ENCODE measurements at regions of chr4 and their contacts with region 1.

Region 1: DNA sequence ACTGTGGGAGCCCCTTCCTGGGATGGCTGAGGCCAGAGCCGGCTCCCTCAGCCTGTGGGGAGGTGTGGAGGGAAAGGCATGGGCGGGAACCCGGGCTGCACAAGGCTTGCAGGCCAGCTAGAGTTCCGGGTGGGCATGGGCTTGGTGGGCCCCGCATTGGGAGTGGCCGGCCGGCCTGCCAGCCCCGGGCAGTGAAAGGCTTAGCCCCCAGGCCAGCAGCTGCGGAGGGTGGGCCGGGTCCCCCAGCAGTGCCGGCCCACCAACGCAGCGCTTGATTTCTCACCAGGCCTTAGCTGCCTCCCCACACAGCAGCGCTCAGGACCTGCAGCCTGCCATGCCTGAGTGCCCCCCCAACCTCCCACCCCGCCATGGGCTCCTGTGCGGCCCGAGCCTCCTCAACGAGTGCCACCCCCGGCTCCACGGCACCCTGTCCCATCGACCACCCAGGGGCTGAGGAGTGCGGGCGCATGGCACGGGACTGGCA is 78.0 kb downstream of the COX7B2 start:
- DNase-seq: no peak
- H3K4me3 ChIP-seq: no peak overlapping the region
- H3K27ac ChIP-seq: no peak overlapping the region
- H3K4me1 ChIP-seq: no peaks in the 10 kb centered on the region
- H3K27me3 ChIP-seq: no peaks in the 10 kb centered on the region
- CTCF ChIP-seq: no peak
- POLR2A ChIP-seq: no peak

Region 2: GRCh38 chr4:46715468-46715867 is 115.5 kb before region 1 on chr4:
- CTCF ChIA-PET with region 1: no interaction called
- POLR2A ChIA-PET with region 1: no interaction called
- dilution Hi-C with region 1: no loop called
- intact Hi-C with region 1: no loop called
- DNase-seq: no peak
- H3K4me3 ChIP-seq: no peak overlapping the region
- H3K27ac ChIP-seq: no peak overlapping the region
- H3K4me1 ChIP-seq: no peaks in the 10 kb centered on the region
- H3K27me3 ChIP-seq: no peaks in the 10 kb centered on the region
- CTCF ChIP-seq: no peak
- POLR2A ChIP-seq: no peak

Region 3: DNA sequence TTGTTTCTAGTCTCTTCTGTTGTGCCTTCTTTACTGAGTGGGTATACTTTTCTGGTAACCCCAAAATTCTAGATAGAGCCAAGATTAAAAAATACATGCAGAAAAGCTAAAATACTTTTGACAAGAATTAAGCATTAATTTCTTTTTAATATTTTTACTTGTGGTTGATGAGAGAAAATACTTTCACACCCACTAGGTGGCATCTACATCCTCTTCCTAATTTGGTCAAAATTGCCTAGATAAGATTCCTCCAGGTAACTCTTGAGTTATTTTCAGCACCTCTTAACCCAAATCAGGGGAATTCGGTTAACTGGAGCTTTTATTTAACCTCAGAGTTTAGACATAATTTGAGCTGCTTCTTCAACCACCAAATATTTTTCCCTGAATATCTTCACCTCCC is 106.5 kb after region 1 on chr4:
- CTCF ChIA-PET with region 1: no interaction called
- POLR2A ChIA-PET with region 1: interaction called, 12 read pairs
- dilution Hi-C with region 1: no loop called
- intact Hi-C with region 1: no loop called
- DNase-seq: peak; percentile 6
- H3K4me3 ChIP-seq: no peak overlapping the region
- H3K27ac ChIP-seq: no peak overlapping the region
- H3K4me1 ChIP-seq: no peaks in the 10 kb centered on the region
- H3K27me3 ChIP-seq: no peaks in the 10 kb centered on the region
- CTCF ChIP-seq: peak in 1 of 2 donors; percentile 1
- POLR2A ChIP-seq: no peak